ENCODE measurements at regions of chr9 and their contacts with region 1.

Region 1: DNA sequence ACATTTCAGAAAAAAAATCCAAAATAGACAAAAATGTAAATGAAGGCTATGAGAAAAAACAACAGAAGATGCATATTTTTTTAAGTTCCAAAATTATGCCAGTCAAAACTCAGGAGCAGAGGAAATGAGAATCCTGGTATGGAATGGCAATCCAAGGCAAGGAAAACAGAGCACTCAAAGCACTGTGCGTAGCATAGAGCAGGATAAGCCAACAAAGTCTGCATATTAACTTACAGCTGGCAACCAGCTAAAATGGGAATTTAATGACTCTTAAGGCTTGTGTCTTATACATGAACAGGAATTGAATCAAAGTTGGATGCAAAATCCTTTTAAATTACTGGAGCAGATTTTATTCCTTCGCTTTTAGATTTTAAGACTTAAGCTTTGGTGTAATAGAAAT is 203.5 kb upstream of the DAPK1 start:
- DNase-seq: no peak
- H3K4me3 ChIP-seq: no peak overlapping the region
- H3K27ac ChIP-seq: no peak overlapping the region
- H3K4me1 ChIP-seq: peaks cover 8% of the 10 kb centered on the region
- H3K27me3 ChIP-seq: no peaks in the 10 kb centered on the region
- CTCF ChIP-seq: no peak

Region 2: DNA sequence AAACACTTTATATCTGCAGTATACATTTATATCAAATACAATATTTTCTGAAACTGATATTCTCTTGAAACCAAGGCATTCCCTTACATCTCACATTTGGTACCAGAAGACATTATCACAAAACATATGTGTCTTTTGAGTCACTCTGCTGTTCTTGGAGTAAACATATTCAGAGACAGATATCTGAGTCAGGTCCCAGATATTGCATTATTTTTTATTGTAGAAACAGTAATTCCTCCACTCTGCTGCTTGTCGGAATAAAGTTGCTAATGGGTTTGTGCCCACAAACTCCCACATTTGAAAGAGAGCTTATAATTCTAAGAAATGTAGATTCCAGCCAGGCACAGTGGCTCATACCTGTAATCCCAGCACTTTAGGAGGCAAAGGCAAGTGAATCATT is 57.6 kb before region 1 on chr9:
- CTCF ChIA-PET with region 1: interaction called, 11 read pairs
- POLR2A ChIA-PET with region 1: no interaction called
- intact Hi-C with region 1: no loop called
- DNase-seq: no peak
- H3K4me3 ChIP-seq: no peak overlapping the region
- H3K27ac ChIP-seq: no peak overlapping the region
- H3K4me1 ChIP-seq: no peaks in the 10 kb centered on the region
- H3K27me3 ChIP-seq: no peaks in the 10 kb centered on the region
- CTCF ChIP-seq: no peak

Region 3: DNA sequence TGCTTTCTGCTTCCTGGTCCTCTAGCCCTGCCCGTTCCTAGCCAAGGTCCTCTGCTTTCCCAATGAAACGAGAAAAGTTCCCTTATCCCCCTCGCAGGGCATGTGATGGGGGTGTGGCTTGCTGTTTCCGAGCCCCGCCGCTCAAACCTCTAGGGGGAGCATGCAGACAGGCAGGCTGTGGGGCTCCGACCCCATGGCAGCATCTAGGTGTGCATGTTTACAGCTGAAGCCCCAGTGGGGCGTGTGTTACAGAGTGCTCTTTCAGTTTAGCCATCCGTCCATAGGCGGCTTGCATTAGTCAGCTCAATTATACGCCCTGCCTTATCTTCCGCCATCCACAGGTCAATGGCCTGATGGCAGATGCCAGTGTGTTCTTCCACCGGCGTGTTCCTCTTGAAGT is 540.2 kb after region 1 on chr9:
- CTCF ChIA-PET with region 1: no interaction called
- POLR2A ChIA-PET with region 1: no interaction called
- intact Hi-C with region 1: no loop called
- DNase-seq: peak; percentile 24
- H3K4me3 ChIP-seq: no peak overlapping the region
- H3K27ac ChIP-seq: no peak overlapping the region
- H3K4me1 ChIP-seq: no peaks in the 10 kb centered on the region
- H3K27me3 ChIP-seq: no peaks in the 10 kb centered on the region
- CTCF ChIP-seq: peak; percentile 43; the same call in 1 of the 2 replicates

Region 4: DNA sequence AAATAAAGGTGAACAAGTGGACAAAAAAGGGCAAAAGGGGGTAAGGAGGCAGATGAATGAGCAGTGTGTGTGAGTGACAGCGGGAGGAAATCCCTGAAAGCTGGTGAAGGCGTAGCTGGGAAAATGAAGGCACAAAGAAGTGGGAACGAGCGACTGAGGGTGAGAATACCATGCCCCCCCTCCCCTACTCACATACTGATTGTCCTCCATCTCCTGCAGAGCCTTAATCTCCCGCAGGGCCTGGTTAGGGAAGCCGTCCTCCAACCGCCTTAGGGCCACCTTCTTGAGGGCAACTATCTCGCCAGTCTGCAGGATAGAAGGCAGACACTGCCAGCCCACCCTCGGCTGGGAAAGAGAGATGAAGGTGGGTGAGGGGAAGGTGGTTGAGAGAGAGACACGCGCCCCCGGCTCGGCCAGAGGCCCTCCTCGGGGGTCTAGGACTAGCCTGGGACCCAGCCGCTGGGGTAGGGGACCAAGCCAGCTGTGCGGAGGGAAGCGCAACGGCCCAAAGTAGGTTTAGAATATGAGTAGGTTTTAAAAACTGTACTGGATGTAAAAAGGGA is 679.7 kb after region 1 on chr9:
- CTCF ChIA-PET with region 1: no interaction called
- POLR2A ChIA-PET with region 1: no interaction called
- intact Hi-C with region 1: no loop called
- DNase-seq: peak; percentile 6
- H3K4me3 ChIP-seq: peak overlapping the region; percentile 69
- H3K27ac ChIP-seq: peak overlapping the region; percentile 68
- H3K4me1 ChIP-seq: no peaks in the 10 kb centered on the region
- H3K27me3 ChIP-seq: no peaks in the 10 kb centered on the region
- CTCF ChIP-seq: no peak